Naive thymus-derived CD4-positive, alpha-beta T cell (primary cell): ENCODE measurements at regions of chr5 and their contacts with region 1.

Region 1: DNA sequence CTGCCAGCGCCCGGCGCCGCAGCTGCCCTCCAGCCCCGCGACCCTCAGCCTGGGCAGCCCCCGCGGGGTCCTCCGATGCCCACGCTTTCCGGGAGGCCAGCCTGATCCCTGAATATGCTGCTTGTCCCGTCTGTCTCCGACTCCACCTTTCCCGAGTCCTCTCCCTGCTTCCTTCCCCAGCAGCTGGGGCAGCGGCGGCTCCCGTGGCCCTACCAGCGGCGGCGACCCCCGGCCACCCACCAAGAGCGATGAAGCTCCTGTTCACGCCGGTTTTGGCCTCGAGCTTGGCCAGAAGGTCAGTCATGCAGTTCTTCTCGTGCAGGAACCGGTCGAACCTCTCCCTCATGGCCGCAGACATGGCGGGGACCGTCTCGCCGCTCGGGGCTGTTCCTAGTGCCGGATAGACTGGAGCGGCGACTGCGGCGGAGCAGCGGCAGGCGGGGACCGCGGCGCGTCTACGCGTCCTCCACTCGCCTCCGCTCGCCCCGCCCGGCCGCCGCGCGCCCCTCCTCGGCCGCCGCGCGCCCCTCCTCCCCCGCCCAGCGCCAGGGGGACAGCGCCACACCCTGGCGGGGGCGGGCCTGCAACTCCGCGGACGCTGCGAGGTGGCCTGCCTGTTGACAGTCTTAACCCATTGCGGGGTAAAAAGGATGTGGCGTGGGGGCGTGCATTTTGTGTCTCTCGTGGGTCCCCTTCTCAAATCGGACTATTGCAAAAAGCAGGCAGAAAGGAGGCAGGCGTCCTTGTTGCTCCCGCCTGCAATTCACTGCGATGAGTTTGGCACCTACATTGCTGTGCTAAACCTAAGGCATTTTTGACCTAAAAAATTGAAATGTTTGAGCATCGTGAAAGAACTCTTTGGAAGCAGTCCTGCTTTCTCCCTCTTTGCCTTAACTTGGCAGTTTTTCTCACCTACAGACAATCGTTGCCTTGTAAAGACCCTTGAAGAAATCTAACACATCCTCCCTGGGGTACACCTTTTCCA is at the start of gene REEP5:
- DNase-seq: peak; percentile 68 to 89 (median 82)
- ATAC-seq: peak; percentile 91
- H3K4me3 ChIP-seq: peak within 1 kb of the TSS; percentile 76
- H3K4me3 Mint-ChIP-seq: peak within 1 kb of the TSS; percentile 77 to 99 (median 91)
- H3K27ac ChIP-seq: peak within 1 kb of the TSS; percentile 79
- H3K27ac Mint-ChIP-seq: peak within 1 kb of the TSS; percentile 88 to 97 (median 92)
- H3K4me1 ChIP-seq: peaks cover 49 to 52% of the 10 kb centered on the region in 2 donors
- H3K4me1 Mint-ChIP-seq: peaks cover 47 to 74% (median 61%) of the 10 kb centered on the region in 7 donors
- H3K27me3 ChIP-seq: no peaks in the 10 kb centered on the region
- H3K27me3 Mint-ChIP-seq: no peaks in the 10 kb centered on the region
- total RNA-seq, gene REEP5: 16.4 to 83.9 (median 30.0) TPM

Region 2: GRCh38 chr5:112691758-112692157 is 230.4 kb before region 1 on chr5:
- CTCF ChIA-PET with region 1: no interaction called
- POLR2A ChIA-PET with region 1: no interaction called
- intact Hi-C with region 1: loop called in 1 of 2 experiments (anchors 5 kb)
- DNase-seq: peak in 3 of 9 donors; percentile 16 to 50 (median 19)
- ATAC-seq: no peak
- H3K4me3 ChIP-seq: no peak overlapping the region
- H3K4me3 Mint-ChIP-seq: no peak overlapping the region
- H3K27ac ChIP-seq: no peak overlapping the region
- H3K27ac Mint-ChIP-seq: no peak overlapping the region
- H3K4me1 ChIP-seq: no peaks in the 10 kb centered on the region
- H3K4me1 Mint-ChIP-seq: no peaks in the 10 kb centered on the region
- H3K27me3 ChIP-seq: no peaks in the 10 kb centered on the region
- H3K27me3 Mint-ChIP-seq: peaks cover 36 to 68% (median 59%) of the 10 kb centered on the region in 5 donors

Region 3: GRCh38 chr5:112757468-112758208 is 164.5 kb before region 1 on chr5:
- CTCF ChIA-PET with region 1: no interaction called
- POLR2A ChIA-PET with region 1: no interaction called
- intact Hi-C with region 1: loop called (anchors 1 to 5 kb)
- DNase-seq: peak in 7 of 9 donors; percentile 14 to 64 (median 52)
- ATAC-seq: peak; percentile 88
- H3K4me3 ChIP-seq: no peak overlapping the region
- H3K4me3 Mint-ChIP-seq: no peak overlapping the region
- H3K27ac ChIP-seq: no peak overlapping the region
- H3K27ac Mint-ChIP-seq: peak overlapping the region in 5 of 9 donors; percentile 36 to 82 (median 58)
- H3K4me1 ChIP-seq: no peaks in the 10 kb centered on the region
- H3K4me1 Mint-ChIP-seq: peaks cover 3 to 25% (median 18%) of the 10 kb centered on the region in 7 donors
- H3K27me3 ChIP-seq: no peaks in the 10 kb centered on the region
- H3K27me3 Mint-ChIP-seq: no peaks in the 10 kb centered on the region

Region 4: DNA sequence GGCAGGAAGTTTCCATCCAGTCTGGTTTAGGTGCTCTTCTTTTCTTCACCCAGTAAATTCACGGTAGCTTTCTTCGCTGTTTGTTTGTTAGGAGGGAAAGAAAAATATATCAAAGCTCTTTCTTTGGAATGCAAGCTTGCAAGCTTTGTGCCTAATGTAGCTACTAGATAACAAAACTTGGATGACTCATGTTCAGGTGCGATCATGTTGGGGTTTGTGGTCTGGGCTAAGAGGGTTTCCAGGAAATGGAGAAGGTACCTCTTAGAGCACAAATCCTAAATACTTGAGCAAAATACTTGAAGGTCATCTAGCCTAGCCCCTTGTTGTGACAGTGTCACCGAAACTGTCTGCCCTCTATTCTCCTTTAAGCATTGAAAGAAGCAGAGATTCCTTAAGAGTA is 43.4 kb before region 1 on chr5:
- CTCF ChIA-PET with region 1: no interaction called
- POLR2A ChIA-PET with region 1: interaction called, 4 read pairs
- intact Hi-C with region 1: loop called (anchors 1 kb)
- DNase-seq: peak in 6 of 9 donors; percentile 5 to 58 (median 14)
- ATAC-seq: peak; percentile 69
- H3K4me3 ChIP-seq: peak overlapping the region; percentile 8
- H3K4me3 Mint-ChIP-seq: peak overlapping the region in 6 of 10 donors; percentile 1 to 67 (median 16)
- H3K27ac ChIP-seq: peak overlapping the region; percentile 15
- H3K27ac Mint-ChIP-seq: peak overlapping the region in 8 of 9 donors; percentile 1 to 90 (median 68)
- H3K4me1 ChIP-seq: peaks cover 5 to 21% of the 10 kb centered on the region in 2 donors
- H3K4me1 Mint-ChIP-seq: peaks cover 22 to 42% (median 30%) of the 10 kb centered on the region in 7 donors
- H3K27me3 ChIP-seq: no peaks in the 10 kb centered on the region
- H3K27me3 Mint-ChIP-seq: no peaks in the 10 kb centered on the region

Region 5: DNA sequence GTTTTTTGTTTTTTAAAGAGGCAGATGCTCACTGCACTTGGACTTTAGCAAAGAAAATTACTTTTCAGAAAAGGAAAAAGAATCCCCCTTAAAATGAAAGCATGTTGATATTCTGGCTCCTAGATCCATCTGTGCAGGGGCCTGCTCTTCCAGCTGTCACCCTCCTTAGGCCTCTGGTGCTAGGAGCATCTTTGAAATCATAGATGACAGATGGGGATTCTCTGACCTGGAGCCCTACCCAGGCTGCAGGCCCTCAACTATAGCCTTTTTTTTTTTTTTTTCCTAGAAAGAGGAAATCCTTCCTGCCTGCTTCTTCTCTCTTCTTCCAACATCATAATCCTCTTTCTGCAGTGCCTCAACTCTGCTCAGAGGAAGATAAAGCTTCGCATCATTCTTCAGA is 38.2 kb after region 1 on chr5:
- CTCF ChIA-PET with region 1: interaction called, 36 read pairs
- POLR2A ChIA-PET with region 1: interaction called, 4 read pairs
- intact Hi-C with region 1: loop called (anchors 1 kb)
- DNase-seq: no peak
- ATAC-seq: no peak
- H3K4me3 ChIP-seq: no peak overlapping the region
- H3K4me3 Mint-ChIP-seq: no peak overlapping the region
- H3K27ac ChIP-seq: no peak overlapping the region
- H3K27ac Mint-ChIP-seq: peak overlapping the region in 1 of 9 donors; percentile 13
- H3K4me1 ChIP-seq: no peaks in the 10 kb centered on the region
- H3K4me1 Mint-ChIP-seq: peaks cover 6 to 44% (median 17%) of the 10 kb centered on the region in 7 donors
- H3K27me3 ChIP-seq: no peaks in the 10 kb centered on the region
- H3K27me3 Mint-ChIP-seq: peaks cover 0 to 7% (median 0%) of the 10 kb centered on the region in 5 donors

Region 6: DNA sequence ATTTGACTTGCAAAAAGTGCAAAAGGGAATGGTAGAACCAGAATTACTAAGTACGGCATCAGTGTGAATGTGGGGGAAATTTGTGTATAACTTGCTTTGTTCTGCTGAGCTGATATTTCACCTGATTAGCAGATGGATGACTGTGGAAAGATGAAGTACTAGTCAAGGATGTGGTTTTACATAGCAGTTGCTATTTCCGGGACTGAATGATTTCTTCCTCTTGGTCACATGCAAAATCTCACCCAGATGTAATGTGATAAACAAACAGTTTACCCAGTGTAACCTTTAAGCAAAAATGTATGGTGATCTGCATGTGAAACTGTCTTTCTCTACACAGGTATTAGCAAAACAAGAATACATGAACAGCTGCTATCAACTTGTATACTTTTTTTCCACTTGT is 100.5 kb after region 1 on chr5:
- CTCF ChIA-PET with region 1: interaction called, 3 read pairs
- POLR2A ChIA-PET with region 1: no interaction called
- intact Hi-C with region 1: loop called in 1 of 2 experiments (anchors 2 kb)
- DNase-seq: peak in 7 of 9 donors; percentile 56 to 86 (median 77)
- ATAC-seq: peak; percentile 95
- H3K4me3 ChIP-seq: peak overlapping the region; percentile 1
- H3K4me3 Mint-ChIP-seq: peak overlapping the region; percentile 5 to 78 (median 70)
- H3K27ac ChIP-seq: peak overlapping the region; percentile 12
- H3K27ac Mint-ChIP-seq: peak overlapping the region; percentile 74 to 94 (median 87)
- H3K4me1 ChIP-seq: peaks cover 36 to 47% of the 10 kb centered on the region in 2 donors
- H3K4me1 Mint-ChIP-seq: peaks cover 24 to 79% (median 68%) of the 10 kb centered on the region in 7 donors
- H3K27me3 ChIP-seq: no peaks in the 10 kb centered on the region
- H3K27me3 Mint-ChIP-seq: no peaks in the 10 kb centered on the region

Region 7: GRCh38 chr5:113090336-113091106 is 168.4 kb after region 1 on chr5:
- CTCF ChIA-PET with region 1: no interaction called
- POLR2A ChIA-PET with region 1: no interaction called
- intact Hi-C with region 1: no loop called
- DNase-seq: peak in 3 of 9 donors; percentile 17 to 44 (median 24)
- ATAC-seq: peak; percentile 51
- H3K4me3 ChIP-seq: no peak overlapping the region
- H3K4me3 Mint-ChIP-seq: peak overlapping the region in 4 of 10 donors; percentile 1 to 59 (median 19)
- H3K27ac ChIP-seq: no peak overlapping the region
- H3K27ac Mint-ChIP-seq: peak overlapping the region in 5 of 9 donors; percentile 15 to 65 (median 51)
- H3K4me1 ChIP-seq: no peaks in the 10 kb centered on the region
- H3K4me1 Mint-ChIP-seq: peaks cover 0 to 24% (median 18%) of the 10 kb centered on the region in 7 donors
- H3K27me3 ChIP-seq: no peaks in the 10 kb centered on the region
- H3K27me3 Mint-ChIP-seq: peaks cover 0 to 26% (median 5%) of the 10 kb centered on the region in 5 donors

Region 8: DNA sequence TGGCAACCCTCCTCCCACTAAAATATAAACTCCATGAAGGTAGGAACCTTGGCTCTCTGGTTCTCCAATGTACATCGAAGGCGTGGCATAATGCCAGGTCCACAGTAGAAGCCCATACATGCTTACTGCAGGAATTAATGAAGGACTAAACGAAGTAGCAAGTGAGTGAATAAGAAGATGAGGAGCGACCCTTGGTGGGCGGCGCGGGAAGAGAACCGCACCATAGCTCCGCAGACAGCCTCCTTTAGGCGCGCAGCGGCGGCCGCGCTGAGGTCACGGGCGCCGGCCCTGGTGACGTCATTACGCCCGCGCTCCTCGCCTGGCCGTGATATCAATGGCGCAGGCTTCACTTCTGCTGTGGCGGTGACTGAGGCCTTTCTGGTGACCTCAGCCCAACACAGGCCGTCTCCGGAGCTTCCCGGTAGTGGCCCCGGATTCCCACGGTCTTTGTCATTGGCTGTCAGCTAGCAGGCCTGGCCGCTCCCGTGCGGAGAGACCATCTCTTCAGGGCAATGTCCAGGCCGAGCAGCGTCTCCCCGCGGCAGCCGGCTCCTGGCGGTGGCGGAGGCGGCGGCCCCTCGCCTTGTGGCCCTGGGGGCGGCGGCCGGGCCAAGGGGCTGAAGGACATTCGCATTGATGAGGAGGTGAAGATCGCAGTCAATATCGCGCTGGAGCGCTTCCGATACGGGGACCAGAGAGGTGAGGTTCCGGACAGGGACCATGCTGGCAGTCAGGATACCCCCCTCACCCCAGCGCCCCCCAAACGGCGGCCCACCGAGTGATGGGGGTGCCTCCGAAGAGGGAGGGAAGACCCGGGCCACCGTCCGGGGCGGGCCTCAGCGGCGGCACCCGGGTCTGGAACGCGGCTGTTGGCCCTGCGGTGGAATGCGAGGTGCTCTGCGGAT is 591.5 kb after region 1 on chr5 and contains the start of gene YTHDC2:
- CTCF ChIA-PET with region 1: no interaction called
- POLR2A ChIA-PET with region 1: no interaction called
- intact Hi-C with region 1: loop called (anchors 1 to 5 kb)
- DNase-seq: peak; percentile 79 to 89 (median 87)
- ATAC-seq: peak; percentile 97
- H3K4me3 ChIP-seq: peak within 1 kb of the TSS; percentile 85
- H3K4me3 Mint-ChIP-seq: peak within 1 kb of the TSS; percentile 86 to 98 (median 94)
- H3K27ac ChIP-seq: peak within 1 kb of the TSS; percentile 94
- H3K27ac Mint-ChIP-seq: peak within 1 kb of the TSS; percentile 86 to 98 (median 97)
- H3K4me1 ChIP-seq: peaks cover 6 to 9% of the 10 kb centered on the region in 2 donors
- H3K4me1 Mint-ChIP-seq: peaks cover 27 to 51% (median 44%) of the 10 kb centered on the region in 7 donors
- H3K27me3 ChIP-seq: no peaks in the 10 kb centered on the region
- H3K27me3 Mint-ChIP-seq: peaks cover 12 to 19% (median 13%) of the 10 kb centered on the region in 5 donors
- total RNA-seq, gene YTHDC2: 27.7 to 53.6 (median 49.2) TPM